PC-9 (cell line): ENCODE measurements at regions of chr3 and their contacts with region 1.

Region 1: GRCh38 chr3:127970966-127971592 is 56.0 kb downstream of the KBTBD12 start:
- DNase-seq: peak; percentile 56 to 59
- H3K4me3 ChIP-seq: no peak overlapping the region
- H3K27ac ChIP-seq: no peak overlapping the region
- H3K4me1 ChIP-seq: no peaks in the 10 kb centered on the region
- H3K27me3 ChIP-seq: no peaks in the 10 kb centered on the region
- CTCF ChIP-seq: peak; percentile 81

Region 2: GRCh38 chr3:127884041-127884440 is 87.0 kb before region 1 on chr3:
- CTCF ChIA-PET with region 1: no interaction called
- POLR2A ChIA-PET with region 1: interaction called, 12 read pairs
- intact Hi-C with region 1: no loop called
- DNase-seq: no peak
- H3K4me3 ChIP-seq: no peak overlapping the region
- H3K27ac ChIP-seq: no peak overlapping the region
- H3K4me1 ChIP-seq: no peaks in the 10 kb centered on the region
- H3K27me3 ChIP-seq: no peaks in the 10 kb centered on the region
- CTCF ChIP-seq: no peak